K562 (cell line): ENCODE measurements at regions of chr15 and their contacts with region 1.

Region 1: GRCh38 chr15:90221246-90221900 is 12.4 kb downstream of the CIB1 start:
- DNase-seq: peak in 3 of 4 experiments; percentile 45 to 68 (median 67)
- ATAC-seq: peak; percentile 85
- H3K4me3 ChIP-seq: no peak overlapping the region
- H3K27ac ChIP-seq: no peak overlapping the region
- H3K4me1 ChIP-seq: peaks cover 0 to 17% of the 10 kb centered on the region in 2 experiments; a peak in 2 of 5 replicates
- H3K27me3 ChIP-seq: no peaks in the 10 kb centered on the region
- CTCF ChIP-seq: peak; percentile 73 to 78 (median 75)
- EP300 ChIP-seq: no peak
- POLR2A ChIP-seq: no peak
- RAD21 ChIP-seq: peak; percentile 66 to 88

Region 2: DNA sequence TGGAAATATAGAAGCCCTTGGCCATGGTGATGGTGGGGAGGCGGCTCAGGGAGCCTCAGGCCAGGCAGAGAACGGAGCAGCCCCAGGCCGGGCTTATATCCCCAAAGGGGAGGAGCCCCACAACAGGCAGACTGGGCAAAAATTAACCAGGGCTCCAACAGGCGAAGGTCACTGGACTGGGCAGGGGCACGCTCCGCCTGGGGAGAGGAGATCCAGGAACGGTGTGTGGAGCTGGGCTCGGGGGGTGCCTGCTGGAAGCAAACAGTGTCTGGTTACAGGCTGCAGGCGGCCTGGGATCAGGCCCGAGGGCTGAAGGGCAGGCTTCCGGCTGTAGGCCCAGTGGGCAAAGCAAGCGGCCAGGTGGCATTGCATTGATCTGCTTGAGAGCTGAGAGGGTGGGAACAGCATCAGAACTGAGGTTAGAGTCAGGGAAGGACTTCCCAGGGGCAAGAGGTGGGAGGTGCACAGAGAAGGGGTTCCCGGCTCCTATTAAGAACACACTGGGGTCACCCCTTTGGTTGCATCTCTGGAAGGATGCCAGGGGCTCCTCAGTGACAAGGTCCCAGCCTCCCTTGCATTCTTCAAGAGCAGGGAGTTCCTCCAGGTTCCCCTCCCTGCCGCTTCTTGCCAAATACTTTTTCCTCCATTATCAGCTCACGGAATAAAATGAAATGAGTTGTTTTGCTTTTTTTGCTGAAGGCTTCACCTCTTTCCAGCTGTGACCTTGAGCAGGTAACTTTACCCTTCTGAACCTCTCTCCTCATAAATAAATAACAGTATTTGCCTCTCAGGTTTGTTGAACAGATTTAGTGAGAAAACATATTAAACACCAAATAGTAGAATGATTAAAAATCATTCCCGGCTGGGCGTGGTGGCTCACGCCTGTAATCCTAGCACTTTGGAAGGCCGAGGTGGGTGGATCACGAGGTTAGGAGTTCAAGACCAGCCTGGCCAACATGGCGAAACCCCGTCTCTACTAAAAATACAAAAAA is 414.5 kb before region 1 on chr15:
- CTCF ChIA-PET with region 1: no interaction called
- POLR2A ChIA-PET with region 1: no interaction called
- in situ Hi-C with region 1: no loop called
- intact Hi-C with region 1: no loop called
- DNase-seq: no peak
- ATAC-seq: no peak
- H3K4me3 ChIP-seq: no peak overlapping the region
- H3K27ac ChIP-seq: no peak overlapping the region
- H3K4me1 ChIP-seq: peaks cover 0 to 51% of the 10 kb centered on the region in 2 experiments; a peak in 3 of 5 replicates
- H3K27me3 ChIP-seq: no peaks in the 10 kb centered on the region
- CTCF ChIP-seq: no peak
- EP300 ChIP-seq: no peak
- POLR2A ChIP-seq: no peak
- RAD21 ChIP-seq: no peak

Region 3: DNA sequence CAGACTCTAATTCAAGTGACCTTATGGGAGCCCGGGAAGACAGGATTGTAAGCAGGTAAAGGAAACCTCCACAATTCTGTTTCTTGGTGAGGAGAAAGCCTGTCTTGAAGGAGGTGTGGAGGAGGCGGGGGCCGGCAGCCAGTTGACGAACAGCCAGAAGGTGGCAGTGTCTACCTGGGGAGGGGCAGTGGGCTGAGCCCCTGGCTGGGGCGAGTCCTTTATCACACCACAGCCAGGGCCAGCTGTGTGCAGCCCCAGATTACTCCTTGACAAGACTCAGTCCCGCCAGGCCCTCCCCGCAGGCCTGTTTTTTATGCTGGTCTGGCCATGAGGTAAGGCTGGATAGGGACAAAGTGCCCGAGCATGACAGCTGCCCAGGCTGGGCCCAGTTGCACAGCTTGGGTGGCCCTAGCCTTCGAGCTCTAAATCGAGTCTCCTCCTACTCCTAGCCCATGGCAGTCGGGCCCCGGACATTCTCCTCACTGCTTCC is 78.2 kb before region 1 on chr15:
- CTCF ChIA-PET with region 1: interaction called, 5 read pairs
- POLR2A ChIA-PET with region 1: interaction called, 4 read pairs
- in situ Hi-C with region 1: no loop called
- intact Hi-C with region 1: loop called (anchors 1 kb)
- DNase-seq: peak; percentile 96 to 98 (median 97)
- ATAC-seq: peak; percentile 98
- H3K4me3 ChIP-seq: no peak overlapping the region
- H3K27ac ChIP-seq: peak overlapping the region; percentile 83
- H3K4me1 ChIP-seq: peaks cover 28 to 35% of the 10 kb centered on the region in 2 experiments
- H3K27me3 ChIP-seq: no peaks in the 10 kb centered on the region
- CTCF ChIP-seq: peak; percentile 94 to 97 (median 97)
- EP300 ChIP-seq: peak; percentile 89
- POLR2A ChIP-seq: no peak
- RAD21 ChIP-seq: peak; percentile 98

Region 4: DNA sequence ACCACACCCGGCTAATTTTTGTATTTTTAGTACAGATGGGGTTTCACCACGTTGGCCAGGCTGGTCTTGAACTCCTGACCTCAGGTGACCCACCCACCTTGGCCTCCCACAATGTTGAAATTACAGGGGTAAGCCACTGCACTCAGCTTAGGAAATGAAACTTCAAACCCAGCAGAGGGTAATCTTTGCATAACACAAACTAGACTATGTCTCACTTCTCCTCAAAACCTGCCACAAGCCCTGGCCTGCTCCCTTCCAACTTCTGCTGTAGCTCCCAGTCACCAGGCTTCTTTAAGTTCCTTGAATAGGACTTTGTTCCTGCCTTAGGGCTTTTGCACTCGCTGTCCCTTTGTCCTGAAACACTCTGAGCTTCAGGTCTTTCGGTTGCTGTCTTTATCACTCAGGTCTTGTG is 59.4 kb before region 1 on chr15:
- CTCF ChIA-PET with region 1: no interaction called
- POLR2A ChIA-PET with region 1: no interaction called
- in situ Hi-C with region 1: loop called (anchors 5 kb)
- intact Hi-C with region 1: no loop called
- DNase-seq: no peak
- ATAC-seq: no peak
- H3K4me3 ChIP-seq: no peak overlapping the region
- H3K27ac ChIP-seq: peak overlapping the region; percentile 13; the same call in 1 of the 3 replicates
- H3K4me1 ChIP-seq: peaks cover 22 to 48% of the 10 kb centered on the region in 2 experiments
- H3K27me3 ChIP-seq: no peaks in the 10 kb centered on the region
- CTCF ChIP-seq: no peak
- EP300 ChIP-seq: no peak
- POLR2A ChIP-seq: no peak
- RAD21 ChIP-seq: 0 out of 4 replicates have a peak, but pooled peaks of 1 of the 2 experiments have one; percentile 16

Region 5: DNA sequence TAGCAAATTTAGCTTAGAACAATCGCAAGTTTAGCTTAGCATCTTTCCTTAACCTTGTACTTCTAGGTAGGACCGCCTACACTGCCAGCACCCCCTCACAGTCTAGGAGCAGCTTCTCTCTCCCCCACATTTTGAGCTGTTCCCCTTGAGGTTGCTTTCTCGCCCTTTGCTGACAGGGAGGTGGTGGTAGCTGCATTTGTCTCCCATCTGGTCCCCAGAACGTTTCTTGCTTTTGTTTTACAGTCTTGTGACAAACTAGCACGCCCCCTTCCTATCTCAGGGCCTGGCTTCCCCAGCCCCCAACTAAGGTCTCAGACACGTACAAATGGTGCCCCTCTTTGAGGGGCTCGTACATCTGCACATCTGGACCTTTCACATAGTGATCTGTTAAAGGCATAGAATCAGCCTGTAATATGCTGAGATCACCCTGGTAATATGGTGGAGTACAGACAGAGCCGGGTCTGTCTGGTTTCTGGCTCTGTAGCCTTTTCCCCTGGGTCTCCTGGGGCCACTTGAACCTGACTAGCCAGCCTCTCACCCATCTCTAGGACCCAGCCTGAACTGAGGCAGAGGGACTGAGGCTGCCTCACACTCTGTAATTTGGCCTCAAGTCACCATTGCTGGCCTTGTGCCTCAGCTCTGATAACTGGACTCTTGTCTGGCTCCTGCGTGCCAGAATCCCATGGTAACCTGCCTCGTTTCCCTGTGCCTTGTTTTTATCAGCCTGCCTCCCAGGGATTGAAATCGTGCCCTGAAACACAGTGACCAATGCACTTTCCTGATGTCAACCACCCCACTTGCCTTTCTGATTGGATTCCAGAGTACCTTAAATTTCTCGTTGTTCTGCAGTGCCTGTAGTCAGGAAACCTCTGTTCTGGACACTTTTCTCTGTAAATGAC is 336.1 kb after region 1 on chr15:
- CTCF ChIA-PET with region 1: no interaction called
- POLR2A ChIA-PET with region 1: no interaction called
- in situ Hi-C with region 1: no loop called
- intact Hi-C with region 1: no loop called
- DNase-seq: peak in 2 of 4 experiments; percentile 38 to 58
- ATAC-seq: peak; percentile 79
- H3K4me3 ChIP-seq: no peak overlapping the region
- H3K27ac ChIP-seq: peak overlapping the region; percentile 70; the same call in 2 of the 3 replicates
- H3K4me1 ChIP-seq: peaks cover 19 to 22% of the 10 kb centered on the region in 2 experiments
- H3K27me3 ChIP-seq: no peaks in the 10 kb centered on the region
- CTCF ChIP-seq: no peak
- EP300 ChIP-seq: no peak
- POLR2A ChIP-seq: no peak
- RAD21 ChIP-seq: no peak